ENCODE measurements at regions of chr14 and their contacts with region 1.

Region 1: GRCh38 chr14:80850197-80850814 is 91.2 kb downstream of the CEP128 start:
- DNase-seq: no peak

Region 2: DNA sequence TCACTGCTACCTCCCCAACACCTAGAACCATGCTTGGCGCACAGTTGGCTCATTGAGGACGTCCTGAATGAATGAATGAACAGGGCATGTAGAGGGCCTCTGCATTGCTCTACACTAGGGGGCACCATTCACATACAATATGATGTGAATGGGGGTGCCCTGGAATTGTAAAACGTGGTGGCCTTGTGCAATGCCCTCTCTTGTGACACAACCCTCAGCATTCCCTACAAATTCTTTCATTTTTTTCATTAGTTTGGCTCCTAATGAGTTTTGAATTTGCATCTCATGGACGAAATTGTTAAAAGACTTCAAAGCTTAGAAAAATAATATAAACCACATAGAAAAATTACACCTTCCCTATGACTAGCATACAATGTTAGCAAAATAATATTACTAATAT is 636.7 kb before region 1 on chr14:
- intact Hi-C with region 1: loop called (anchors 10 kb)
- DNase-seq: no peak

Region 3: GRCh38 chr14:80784820-80785219 is 65.5 kb before region 1 on chr14:
- intact Hi-C with region 1: no loop called
- DNase-seq: peak in 2 of 10 donors; percentile 2 to 13

Region 4: GRCh38 chr14:81122326-81122725 is 272.0 kb after region 1 on chr14:
- intact Hi-C with region 1: no loop called
- DNase-seq: no peak